ENCODE measurements at regions of chr1 and their contacts with region 1.

Region 1: GRCh38 chr1:27556781-27557595 is 47.0 kb downstream of the AHDC1 start:
- DNase-seq: peak; percentile 84
- ATAC-seq: peak; percentile 74
- H3K4me3 Mint-ChIP-seq: peak overlapping the region; percentile 3
- H3K27ac Mint-ChIP-seq: peak overlapping the region; percentile 84
- H3K4me1 Mint-ChIP-seq: peaks cover 33% of the 10 kb centered on the region
- H3K27me3 Mint-ChIP-seq: no peaks in the 10 kb centered on the region

Region 2: GRCh38 chr1:27525296-27526272 is 31.4 kb before region 1 on chr1:
- CTCF ChIA-PET with region 1: interaction called, 51 read pairs
- POLR2A ChIA-PET with region 1: interaction called, 5 read pairs
- DNase-seq: peak; percentile 85
- ATAC-seq: peak; percentile 56
- H3K4me3 Mint-ChIP-seq: peak overlapping the region; percentile 66
- H3K27ac Mint-ChIP-seq: peak overlapping the region; percentile 65
- H3K4me1 Mint-ChIP-seq: peaks cover 67% of the 10 kb centered on the region
- H3K27me3 Mint-ChIP-seq: no peaks in the 10 kb centered on the region

Region 3: GRCh38 chr1:27542408-27543273 is 14.3 kb before region 1 on chr1:
- CTCF ChIA-PET with region 1: interaction called, 23 read pairs
- POLR2A ChIA-PET with region 1: no interaction called
- DNase-seq: no peak
- ATAC-seq: no peak
- H3K4me3 Mint-ChIP-seq: no peak overlapping the region
- H3K27ac Mint-ChIP-seq: peak overlapping the region; percentile 56
- H3K4me1 Mint-ChIP-seq: peaks cover 21% of the 10 kb centered on the region
- H3K27me3 Mint-ChIP-seq: no peaks in the 10 kb centered on the region

Region 4: GRCh38 chr1:27568300-27569087 is 11.5 kb after region 1 on chr1:
- CTCF ChIA-PET with region 1: interaction called, 113 read pairs
- POLR2A ChIA-PET with region 1: interaction called, 3 read pairs
- DNase-seq: peak; percentile 94
- ATAC-seq: peak; percentile 98
- H3K4me3 Mint-ChIP-seq: peak overlapping the region; percentile 64
- H3K27ac Mint-ChIP-seq: peak overlapping the region; percentile 46
- H3K4me1 Mint-ChIP-seq: peaks cover 29% of the 10 kb centered on the region
- H3K27me3 Mint-ChIP-seq: no peaks in the 10 kb centered on the region

Region 5: DNA sequence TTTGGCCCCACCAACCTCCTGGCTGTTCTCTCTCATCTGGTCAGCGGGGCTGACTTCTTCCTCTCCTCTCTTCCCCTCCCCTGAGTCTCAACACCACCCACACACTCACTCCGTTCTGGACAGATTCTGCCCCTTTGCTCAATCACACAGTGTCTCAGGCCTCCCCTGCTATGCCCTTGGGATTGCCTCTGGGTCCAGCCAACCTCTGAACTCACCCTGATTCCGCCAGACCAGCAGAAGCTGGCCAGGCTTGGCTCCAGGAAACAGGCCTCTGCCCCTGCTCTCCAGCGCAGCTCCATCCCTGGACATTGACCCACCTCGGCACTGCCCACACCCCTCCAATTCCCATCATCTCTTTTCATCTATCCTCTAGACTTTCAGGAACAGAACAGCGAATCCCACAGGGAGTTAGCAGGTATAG is 24.8 kb after region 1 on chr1:
- CTCF ChIA-PET with region 1: interaction called, 30 read pairs
- POLR2A ChIA-PET with region 1: no interaction called
- DNase-seq: no peak
- ATAC-seq: no peak
- H3K4me3 Mint-ChIP-seq: no peak overlapping the region
- H3K27ac Mint-ChIP-seq: peak overlapping the region; percentile 2
- H3K4me1 Mint-ChIP-seq: peaks cover 2% of the 10 kb centered on the region
- H3K27me3 Mint-ChIP-seq: peaks cover 1% of the 10 kb centered on the region

Region 6: DNA sequence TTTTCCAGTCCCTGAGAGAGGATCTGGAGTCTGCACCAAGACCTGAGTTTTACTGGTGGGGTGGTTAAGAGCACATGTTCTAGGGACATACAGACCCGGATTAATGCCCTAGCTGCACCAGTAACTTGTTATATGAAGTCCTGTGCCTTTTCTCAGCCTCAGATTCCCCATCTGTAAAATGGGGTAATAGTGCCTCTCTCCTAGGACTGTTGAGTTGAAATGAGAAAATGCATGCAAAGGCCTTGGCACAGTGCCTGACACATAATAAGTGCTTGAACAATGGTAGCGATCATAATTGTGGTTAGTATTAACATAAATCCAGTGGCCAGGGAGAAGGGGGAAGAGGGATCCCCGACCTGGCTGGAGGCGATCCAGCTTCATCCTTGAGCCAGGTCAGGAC is 34.6 kb after region 1 on chr1:
- CTCF ChIA-PET with region 1: interaction called, 73 read pairs
- POLR2A ChIA-PET with region 1: no interaction called
- DNase-seq: no peak
- ATAC-seq: no peak
- H3K4me3 Mint-ChIP-seq: no peak overlapping the region
- H3K27ac Mint-ChIP-seq: no peak overlapping the region
- H3K4me1 Mint-ChIP-seq: no peaks in the 10 kb centered on the region
- H3K27me3 Mint-ChIP-seq: no peaks in the 10 kb centered on the region